PC-3 (cell line): ENCODE measurements at regions of chr3 and their contacts with region 1.

Region 1: DNA sequence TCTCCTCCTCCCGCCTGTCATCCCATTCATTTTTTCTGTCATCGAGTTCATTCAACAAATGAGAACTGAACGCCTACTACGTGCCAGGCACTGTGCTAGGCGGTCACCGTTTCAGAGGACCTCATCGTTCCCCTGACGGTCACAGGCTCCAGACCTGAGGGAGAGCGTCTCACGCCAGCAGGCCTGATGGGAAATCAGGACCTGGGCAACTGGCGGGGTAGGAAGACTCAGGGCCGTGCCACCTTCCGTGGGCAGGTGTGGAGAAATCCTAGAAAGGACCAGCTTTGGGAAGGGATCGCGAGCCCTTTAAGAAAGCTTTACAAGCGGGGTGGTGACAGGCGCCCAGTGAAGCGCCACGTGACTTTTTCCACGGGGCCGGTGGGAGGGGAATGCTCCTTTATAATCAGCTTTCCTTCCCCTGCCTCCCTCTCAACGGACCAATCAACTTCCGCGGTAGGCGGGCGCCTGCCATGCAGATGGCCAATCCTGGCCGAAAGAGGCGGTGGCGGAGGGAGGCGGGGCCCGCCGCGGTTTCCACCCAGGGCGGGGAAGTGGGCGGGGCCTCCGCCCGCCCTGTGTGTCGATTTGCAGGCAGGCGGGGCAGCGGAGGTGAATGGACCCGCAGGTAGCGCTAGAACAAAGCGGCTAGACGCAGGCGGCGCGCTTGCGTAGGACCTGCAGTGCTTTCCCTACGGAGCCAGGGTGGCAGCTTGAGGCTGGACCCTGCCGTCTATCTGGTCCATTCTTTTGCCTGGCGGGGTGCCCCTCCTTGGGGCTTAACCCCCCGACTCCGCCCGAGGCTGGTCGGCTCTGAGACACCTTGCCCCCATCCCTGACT is 816 bp upstream of the DUSP7 start:
- DNase-seq: peak; percentile 100
- ATAC-seq: peak; percentile 73
- H3K4me3 ChIP-seq: peak overlapping the region; percentile 70
- H3K27ac ChIP-seq: peak overlapping the region; percentile 55
- H3K4me1 ChIP-seq: peaks cover 40% of the 10 kb centered on the region
- H3K27me3 ChIP-seq: no peaks in the 10 kb centered on the region
- CTCF ChIP-seq: no peak

Region 2: DNA sequence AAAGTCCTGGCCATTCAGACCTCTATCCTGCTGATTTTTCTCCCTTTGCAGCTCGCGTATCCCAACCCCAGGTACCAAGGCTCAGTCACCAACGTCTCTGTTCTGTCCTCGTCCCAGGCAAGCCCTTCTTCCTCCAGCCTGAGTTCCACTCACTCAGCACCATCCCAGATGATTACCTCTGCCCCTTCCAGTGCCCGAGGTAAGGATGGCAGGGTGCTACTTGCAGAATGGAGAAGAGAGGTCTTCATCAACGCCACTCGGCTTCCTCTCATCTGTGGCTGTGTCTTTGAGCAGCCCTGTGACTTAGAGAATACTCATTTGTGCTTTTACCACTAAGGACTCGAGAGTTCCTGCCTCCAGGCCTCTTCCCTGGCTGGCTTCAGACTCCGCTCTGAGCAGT is 694.7 kb before region 1 on chr3:
- CTCF ChIA-PET with region 1: no interaction called
- POLR2A ChIA-PET with region 1: no interaction called
- intact Hi-C with region 1: no loop called
- DNase-seq: no peak
- ATAC-seq: no peak
- H3K4me3 ChIP-seq: no peak overlapping the region
- H3K27ac ChIP-seq: no peak overlapping the region
- H3K4me1 ChIP-seq: no peaks in the 10 kb centered on the region
- H3K27me3 ChIP-seq: peaks cover 21% of the 10 kb centered on the region
- CTCF ChIP-seq: no peak

Region 3: GRCh38 chr3:51931756-51932155 is 125.4 kb before region 1 on chr3:
- CTCF ChIA-PET with region 1: no interaction called
- POLR2A ChIA-PET with region 1: no interaction called
- intact Hi-C with region 1: no loop called
- DNase-seq: no peak
- ATAC-seq: no peak
- H3K4me3 ChIP-seq: no peak overlapping the region
- H3K27ac ChIP-seq: no peak overlapping the region
- H3K4me1 ChIP-seq: no peaks in the 10 kb centered on the region
- H3K27me3 ChIP-seq: no peaks in the 10 kb centered on the region
- CTCF ChIP-seq: no peak

Region 4: GRCh38 chr3:51941798-51942602 is 115.2 kb before region 1 on chr3 and contains the starts of genes PARP3 and RRP9:
- CTCF ChIA-PET with region 1: interaction called, 3 read pairs
- POLR2A ChIA-PET with region 1: no interaction called
- intact Hi-C with region 1: loop called (anchors 1 kb)
- DNase-seq: peak; percentile 100
- ATAC-seq: peak; percentile 86
- H3K4me3 ChIP-seq: peak within 1 kb of the TSS; percentile 92
- H3K27ac ChIP-seq: peak within 1 kb of the TSS; percentile 81
- H3K4me1 ChIP-seq: peaks cover 33% of the 10 kb centered on the region
- H3K27me3 ChIP-seq: no peaks in the 10 kb centered on the region
- CTCF ChIP-seq: peak; percentile 97
- total RNA-seq, gene PARP3: 19.3 and 30.5 TPM in 2 replicates
- total RNA-seq, gene RRP9: 95.0 and 112 TPM in 2 replicates

Region 5: GRCh38 chr3:52036222-52036694 is 20.9 kb before region 1 on chr3:
- CTCF ChIA-PET with region 1: interaction called, 15 read pairs
- POLR2A ChIA-PET with region 1: interaction called, 3 read pairs
- intact Hi-C with region 1: no loop called
- DNase-seq: no peak
- ATAC-seq: no peak
- H3K4me3 ChIP-seq: no peak overlapping the region
- H3K27ac ChIP-seq: no peak overlapping the region
- H3K4me1 ChIP-seq: peaks cover 19% of the 10 kb centered on the region
- H3K27me3 ChIP-seq: no peaks in the 10 kb centered on the region
- CTCF ChIP-seq: no peak

Region 6: GRCh38 chr3:52078781-52079570 is 21.8 kb after region 1 on chr3:
- CTCF ChIA-PET with region 1: interaction called, 13 read pairs
- POLR2A ChIA-PET with region 1: no interaction called
- intact Hi-C with region 1: no loop called
- DNase-seq: no peak
- ATAC-seq: no peak
- H3K4me3 ChIP-seq: no peak overlapping the region
- H3K27ac ChIP-seq: no peak overlapping the region
- H3K4me1 ChIP-seq: no peaks in the 10 kb centered on the region
- H3K27me3 ChIP-seq: no peaks in the 10 kb centered on the region
- CTCF ChIP-seq: no peak

Region 7: GRCh38 chr3:52144034-52144795 is 87.0 kb after region 1 on chr3:
- CTCF ChIA-PET with region 1: no interaction called
- POLR2A ChIA-PET with region 1: no interaction called
- intact Hi-C with region 1: loop called (anchors 1 kb)
- DNase-seq: peak; percentile 86
- ATAC-seq: peak; percentile 95
- H3K4me3 ChIP-seq: no peak overlapping the region
- H3K27ac ChIP-seq: no peak overlapping the region
- H3K4me1 ChIP-seq: peaks cover 2% of the 10 kb centered on the region; the same call in 1 of the 2 replicates
- H3K27me3 ChIP-seq: no peaks in the 10 kb centered on the region
- CTCF ChIP-seq: peak; percentile 93

Region 8: GRCh38 chr3:52220380-52221026 is 163.3 kb after region 1 on chr3:
- CTCF ChIA-PET with region 1: interaction called, 3 read pairs
- POLR2A ChIA-PET with region 1: no interaction called
- intact Hi-C with region 1: loop called (anchors 10 kb)
- DNase-seq: peak; percentile 93
- ATAC-seq: peak; percentile 45
- H3K4me3 ChIP-seq: no peak overlapping the region
- H3K27ac ChIP-seq: 0 out of 2 replicates have a peak overlapping the region, but pooled peaks have one; percentile 13
- H3K4me1 ChIP-seq: peaks cover 49% of the 10 kb centered on the region
- H3K27me3 ChIP-seq: no peaks in the 10 kb centered on the region
- CTCF ChIP-seq: peak; percentile 94